Mucosa of descending colon (tissue), 3 donors: ENCODE measurements at regions of chr2 and their contacts with region 1.

Region 1: GRCh38 chr2:66429071-66429477 is 5.9 kb upstream of the MEIS1 start:
- DNase-seq: peak in 1 of 3 donors; percentile 51
- ATAC-seq: no peak
- H3K4me3 ChIP-seq: no peak overlapping the region
- H3K4me1 ChIP-seq: peaks cover 14% of the 10 kb centered on the region
- CTCF ChIP-seq: peak; percentile 53

Region 2: GRCh38 chr2:65722028-65722778 is 706.9 kb before region 1 on chr2:
- intact Hi-C with region 1: loop called in 1 of 2 experiments (anchors 10 kb)
- DNase-seq: peak in 2 of 3 donors; percentile 5 to 30
- ATAC-seq: peak; percentile 35
- H3K4me3 ChIP-seq: no peak overlapping the region
- H3K4me1 ChIP-seq: no peaks in the 10 kb centered on the region
- CTCF ChIP-seq: no peak

Region 3: GRCh38 chr2:66346231-66346664 is 82.8 kb before region 1 on chr2:
- intact Hi-C with region 1: no loop called
- DNase-seq: no peak
- ATAC-seq: no peak
- H3K4me3 ChIP-seq: no peak overlapping the region
- H3K4me1 ChIP-seq: no peaks in the 10 kb centered on the region
- CTCF ChIP-seq: no peak

Region 4: DNA sequence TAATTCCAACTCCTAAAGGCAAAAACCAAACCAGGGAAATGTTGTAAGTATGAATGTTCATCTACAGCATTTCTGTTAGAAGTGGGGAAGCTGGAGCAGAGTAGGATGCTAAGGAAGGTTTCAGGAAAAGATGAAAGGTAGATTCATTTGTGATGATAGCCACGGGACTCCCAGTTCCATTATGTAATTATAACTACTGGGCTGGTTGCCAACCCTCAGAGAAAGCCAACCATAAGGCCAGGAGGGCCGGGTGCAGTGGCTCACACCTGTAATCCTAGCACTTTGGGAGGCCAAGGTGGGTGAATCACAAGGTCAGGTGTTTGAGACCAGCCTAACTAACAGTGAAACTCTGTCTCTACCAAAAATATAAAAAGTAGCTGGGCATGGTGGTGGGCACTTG is 679.2 kb after region 1 on chr2:
- intact Hi-C with region 1: no loop called
- DNase-seq: no peak
- ATAC-seq: no peak
- H3K4me3 ChIP-seq: no peak overlapping the region
- H3K4me1 ChIP-seq: no peaks in the 10 kb centered on the region
- CTCF ChIP-seq: no peak

Region 5: GRCh38 chr2:67840460-67841068 is 1411.5 kb after region 1 on chr2:
- intact Hi-C with region 1: loop called in 1 of 2 experiments (anchors 10 kb)
- DNase-seq: peak; percentile 53 to 68 (median 59)
- ATAC-seq: peak; percentile 88
- H3K4me3 ChIP-seq: no peak overlapping the region
- H3K4me1 ChIP-seq: no peaks in the 10 kb centered on the region
- CTCF ChIP-seq: no peak